ENCODE measurements at regions of chr10 and their contacts with region 1.

Region 1: DNA sequence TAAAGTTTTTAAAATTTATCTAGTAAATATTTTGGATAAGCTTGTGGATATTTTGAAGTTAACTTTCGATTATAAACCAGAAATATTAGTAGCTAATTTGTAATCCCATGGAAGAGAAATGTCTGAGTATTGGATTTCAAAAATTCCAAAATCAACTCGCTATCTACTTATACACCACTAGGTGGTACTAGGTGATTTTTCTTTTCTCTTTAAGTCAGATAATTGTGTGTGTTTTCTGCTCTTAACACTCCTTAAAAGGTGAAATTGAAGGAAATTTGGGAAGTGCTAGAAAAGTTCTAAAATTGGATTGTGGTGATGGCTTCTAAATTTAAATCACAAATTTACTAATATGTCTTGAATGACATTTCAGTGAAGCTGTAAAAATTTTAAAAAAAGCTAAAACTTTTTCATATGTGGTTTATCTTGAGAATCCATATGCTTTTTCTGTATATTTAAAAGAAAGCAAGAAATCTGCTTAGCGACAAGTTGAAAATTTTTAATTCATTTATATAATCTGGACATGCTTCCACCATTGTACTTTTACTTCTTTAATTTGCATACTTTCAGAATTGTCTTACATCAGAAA is 90.2 kb downstream of the IPMK start:
- DNase-seq: no peak
- ATAC-seq: no peak

Region 2: GRCh38 chr10:58291538-58292174 is 114.2 kb after region 1 on chr10:
- intact Hi-C with region 1: loop called (anchors 5 kb)
- DNase-seq: no peak
- ATAC-seq: peak; percentile 70